ENCODE measurements at regions of chr2 and their contacts with region 1.

Region 1: DNA sequence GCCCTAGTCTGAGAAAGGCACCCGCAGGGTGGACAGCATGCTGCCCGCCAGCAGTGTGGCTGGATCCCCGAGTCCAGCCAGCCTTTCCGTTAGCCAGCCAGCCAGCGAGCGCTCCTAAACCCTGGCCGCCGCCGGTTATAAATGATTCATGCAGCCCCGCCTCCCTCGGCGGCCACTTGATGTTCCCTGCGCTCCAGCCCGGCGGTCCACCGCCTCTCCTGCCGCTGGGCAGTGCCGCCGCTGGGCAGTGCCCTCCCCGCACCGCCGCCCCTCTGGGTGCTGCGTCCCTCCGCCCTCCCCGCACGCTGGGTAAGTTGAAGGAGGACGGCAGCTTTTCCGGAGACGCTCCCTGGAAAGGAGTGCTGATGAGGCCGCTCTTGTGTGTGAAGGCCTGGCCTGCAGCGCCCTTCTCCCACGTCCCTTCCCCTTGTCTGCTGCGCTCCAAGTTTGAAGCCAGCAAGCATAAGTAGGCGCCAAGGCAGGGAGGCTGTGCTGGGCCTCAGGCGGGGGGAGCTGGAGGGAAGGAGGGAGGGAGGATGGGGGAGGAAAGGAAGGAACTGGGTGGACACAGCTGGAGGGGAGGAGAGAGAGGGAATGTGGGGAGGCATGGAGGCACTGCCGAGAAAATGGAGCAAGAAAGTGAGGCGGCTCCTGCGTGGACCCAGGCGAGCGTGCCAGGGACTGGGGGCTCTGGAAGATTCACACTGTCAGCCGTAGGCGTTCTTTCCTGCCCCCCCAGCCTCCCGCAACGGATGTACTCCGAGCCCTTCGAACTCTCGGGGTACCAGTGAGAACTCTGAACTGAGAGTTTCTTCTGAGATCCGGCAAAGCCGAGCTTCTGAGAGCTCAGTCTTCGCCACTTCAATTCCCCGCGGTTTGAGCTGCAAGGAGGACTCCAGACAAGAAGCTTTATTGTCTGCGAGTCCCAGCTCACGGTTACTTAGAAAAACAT is 131.9 kb downstream of the GLI2 start:
- DNase-seq: peak; percentile 50
- H3K4me3 ChIP-seq: peak overlapping the region; percentile 20 to 28
- H3K27ac ChIP-seq: peak overlapping the region; percentile 60 to 62
- H3K4me1 ChIP-seq: no peaks in the 10 kb centered on the region
- H3K27me3 ChIP-seq: no peaks in the 10 kb centered on the region
- CTCF ChIP-seq: no peak
- POLR2A ChIP-seq: no peak

Region 2: DNA sequence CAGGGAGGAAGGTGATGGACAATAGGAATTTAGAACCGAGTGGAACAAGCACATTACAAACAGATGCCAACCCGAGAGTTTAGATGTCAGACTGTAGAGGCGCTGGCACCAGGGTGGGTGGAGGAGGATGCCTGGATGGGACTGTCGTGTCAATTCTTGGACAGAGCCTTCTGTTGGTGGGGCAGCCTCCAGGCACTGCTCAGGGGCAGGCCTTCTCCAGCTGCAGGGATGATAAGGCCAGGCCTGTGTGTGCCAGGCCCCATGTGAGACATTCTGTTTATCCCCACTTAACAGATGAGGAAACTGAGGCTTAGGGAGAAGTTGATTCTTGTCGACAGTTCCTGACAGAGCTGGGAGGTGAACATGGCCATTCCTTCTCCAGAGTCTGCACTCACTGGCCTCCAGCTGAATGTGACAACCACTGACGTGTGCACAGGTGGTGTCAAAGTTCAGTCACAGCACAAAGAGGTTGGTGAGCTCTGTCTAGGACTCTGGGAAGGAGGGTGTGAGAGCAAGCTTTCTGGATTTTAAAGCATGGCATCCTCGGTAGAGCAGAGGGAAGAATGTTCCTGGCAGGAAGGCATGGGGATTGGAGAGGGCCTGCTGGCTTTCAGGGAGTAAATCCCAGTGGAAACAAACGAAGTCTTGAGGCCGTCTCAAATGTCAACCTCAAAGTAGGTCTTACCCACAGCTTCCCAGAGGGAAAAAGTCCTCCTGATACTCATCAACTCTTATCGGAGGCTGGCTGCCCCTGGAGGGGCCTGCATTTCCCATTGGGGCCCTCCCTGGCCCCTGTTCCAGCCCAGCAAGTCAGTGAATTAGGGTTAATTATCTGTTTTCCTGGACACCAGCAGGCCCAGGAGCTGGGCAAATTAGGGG is 79.5 kb before region 1 on chr2:
- intact Hi-C with region 1: loop called (anchors 5 kb)
- DNase-seq: no peak
- H3K4me3 ChIP-seq: no peak overlapping the region
- H3K27ac ChIP-seq: no peak overlapping the region
- H3K4me1 ChIP-seq: peaks cover 8% of the 10 kb centered on the region
- H3K27me3 ChIP-seq: no peaks in the 10 kb centered on the region
- CTCF ChIP-seq: no peak
- POLR2A ChIP-seq: no peak

Region 3: GRCh38 chr2:120904830-120905234 is 37.3 kb after region 1 on chr2:
- intact Hi-C with region 1: loop called (anchors 5 kb)
- DNase-seq: no peak
- H3K4me3 ChIP-seq: no peak overlapping the region
- H3K27ac ChIP-seq: peak overlapping the region in 1 of 2 donors; percentile 9
- H3K4me1 ChIP-seq: no peaks in the 10 kb centered on the region
- H3K27me3 ChIP-seq: no peaks in the 10 kb centered on the region
- CTCF ChIP-seq: no peak
- POLR2A ChIP-seq: no peak

Region 4: GRCh38 chr2:120934574-120935340 is 67.2 kb after region 1 on chr2:
- intact Hi-C with region 1: loop called (anchors 5 kb)
- DNase-seq: peak; percentile 79
- H3K4me3 ChIP-seq: no peak overlapping the region
- H3K27ac ChIP-seq: peak overlapping the region; percentile 41 to 66
- H3K4me1 ChIP-seq: peaks cover 39% of the 10 kb centered on the region
- H3K27me3 ChIP-seq: no peaks in the 10 kb centered on the region
- CTCF ChIP-seq: no peak
- POLR2A ChIP-seq: no peak

Measured in prostate gland (tissue), 2 donors.